ENCODE measurements at regions of chr4 and their contacts with region 1.

Region 1: DNA sequence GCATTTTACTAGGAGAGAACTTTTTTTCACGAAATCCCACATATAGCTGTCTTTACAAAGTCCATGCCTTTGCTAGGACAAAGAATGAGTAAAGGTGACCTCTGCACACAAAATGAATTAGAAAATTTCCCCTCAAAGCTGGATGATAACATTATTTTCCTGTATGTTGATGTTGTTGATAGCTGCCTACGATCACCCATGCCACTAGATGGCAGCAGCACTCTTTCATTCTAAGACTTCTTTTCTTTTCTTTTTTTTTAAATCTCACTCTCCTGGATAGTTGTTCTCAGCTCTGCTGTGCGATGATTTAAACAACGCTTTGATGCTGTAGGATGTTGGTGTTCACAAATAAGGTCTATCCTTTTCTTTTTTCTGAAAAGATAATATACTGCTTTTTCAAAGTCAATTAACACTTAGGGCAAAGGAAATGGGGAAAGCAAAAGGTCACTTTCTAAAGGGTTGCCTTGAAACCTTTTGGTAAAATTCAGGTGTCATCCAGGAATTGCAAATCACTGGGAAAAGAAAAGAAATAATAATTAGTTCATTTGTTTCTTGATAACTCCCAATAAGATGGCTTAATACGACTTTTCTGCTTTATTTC is 266.8 kb downstream of the C4orf33 start:
- DNase-seq: peak; percentile 61
- CTCF ChIP-seq: peak; percentile 71

Region 2: GRCh38 chr4:129189630-129190029 is 173.1 kb before region 1 on chr4:
- in situ Hi-C with region 1: no loop called
- DNase-seq: no peak
- CTCF ChIP-seq: no peak

Region 3: GRCh38 chr4:129641179-129641578 is 278.4 kb after region 1 on chr4:
- in situ Hi-C with region 1: loop called (anchors 10 kb)
- DNase-seq: peak; percentile 19
- CTCF ChIP-seq: peak; percentile 82

Region 4: DNA sequence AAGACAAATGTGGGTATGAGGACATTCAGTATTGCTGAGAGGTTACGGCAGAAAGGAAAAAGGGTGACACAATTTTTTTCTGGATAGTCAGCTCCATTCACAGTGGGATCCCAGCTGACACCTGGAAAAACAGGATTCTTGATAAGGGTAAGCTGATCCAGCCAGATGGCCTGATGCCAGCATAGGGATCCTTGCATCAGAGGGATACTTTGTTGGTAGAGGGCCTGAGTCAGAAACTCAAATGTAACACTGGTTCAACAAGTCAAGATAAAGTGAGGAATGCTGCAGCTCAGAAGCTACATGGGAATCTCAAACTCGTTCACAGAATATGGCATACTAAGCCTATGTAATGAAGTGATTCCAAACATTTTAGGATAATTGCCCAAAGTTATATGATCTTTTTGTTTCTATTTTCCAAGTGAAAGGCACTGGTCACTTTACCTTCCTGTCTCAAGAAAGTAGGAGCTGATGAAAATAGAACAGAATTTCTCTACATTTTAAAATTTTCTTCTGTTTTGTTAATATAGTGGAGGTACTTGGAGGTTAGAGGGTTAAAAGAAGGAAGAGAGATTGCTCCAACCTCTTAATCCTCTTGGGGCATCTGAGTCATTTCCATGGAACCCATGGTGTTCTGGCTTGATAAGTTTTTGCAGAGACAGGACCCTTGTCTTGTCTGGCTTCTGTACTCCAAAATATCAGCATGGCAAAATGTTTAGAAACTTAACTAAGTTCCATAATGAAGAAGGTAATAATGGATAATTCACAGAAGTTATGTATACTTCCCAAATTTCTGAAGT is 460.1 kb after region 1 on chr4:
- in situ Hi-C with region 1: no loop called
- DNase-seq: no peak
- CTCF ChIP-seq: no peak

Measured in GM13976 (cell line).